Caco-2 (cell line): ENCODE measurements at regions of chr4 and their contacts with region 1.

Region 1: GRCh38 chr4:103478729-103479128 is 241.1 kb downstream of the TACR3 start:
- DNase-seq: peak in 1 of 2 experiments; percentile 9
- H3K4me3 ChIP-seq: no peak overlapping the region
- H3K4me3 Mint-ChIP-seq: no peak overlapping the region
- H3K27ac Mint-ChIP-seq: no peak overlapping the region
- H3K4me1 ChIP-seq: peaks cover 19% of the 10 kb centered on the region
- H3K4me1 Mint-ChIP-seq: no peaks in the 10 kb centered on the region
- H3K27me3 ChIP-seq: no peaks in the 10 kb centered on the region
- H3K27me3 Mint-ChIP-seq: no peaks in the 10 kb centered on the region
- CTCF ChIP-seq: no peak

Region 2: DNA sequence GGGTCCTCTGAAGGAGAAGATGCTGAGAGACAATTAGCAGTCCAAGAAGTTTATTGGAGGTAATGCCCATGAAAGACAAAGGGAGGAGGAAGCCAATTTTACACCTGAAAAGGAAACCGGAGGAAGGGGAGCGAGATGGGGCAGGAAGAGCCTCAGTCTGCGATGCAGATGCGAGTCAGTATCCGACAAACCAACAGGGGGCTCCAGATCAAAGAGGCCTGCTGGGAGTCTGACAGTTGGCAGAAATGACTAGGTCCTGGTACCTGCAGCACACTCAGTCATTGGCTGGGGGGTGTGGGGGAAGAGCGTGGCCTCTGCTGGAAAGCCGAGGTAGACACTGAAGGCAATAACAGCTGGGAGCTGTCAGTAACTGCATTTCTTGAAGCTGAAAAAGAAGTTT is 49.4 kb before region 1 on chr4:
- CTCF ChIA-PET with region 1: no interaction called
- POLR2A ChIA-PET with region 1: no interaction called
- intact Hi-C with region 1: loop called (anchors 1 kb)
- DNase-seq: peak in 1 of 2 experiments; percentile 11
- H3K4me3 ChIP-seq: no peak overlapping the region
- H3K4me3 Mint-ChIP-seq: no peak overlapping the region
- H3K27ac Mint-ChIP-seq: no peak overlapping the region
- H3K4me1 ChIP-seq: peaks cover 22% of the 10 kb centered on the region
- H3K4me1 Mint-ChIP-seq: peaks cover 11% of the 10 kb centered on the region
- H3K27me3 ChIP-seq: no peaks in the 10 kb centered on the region
- H3K27me3 Mint-ChIP-seq: no peaks in the 10 kb centered on the region
- CTCF ChIP-seq: no peak

Region 3: GRCh38 chr4:103493446-103494179 is 14.9 kb after region 1 on chr4:
- CTCF ChIA-PET with region 1: no interaction called
- POLR2A ChIA-PET with region 1: no interaction called
- intact Hi-C with region 1: loop called (anchors 2 kb)
- DNase-seq: peak; percentile 36 to 58
- H3K4me3 ChIP-seq: no peak overlapping the region
- H3K4me3 Mint-ChIP-seq: no peak overlapping the region
- H3K27ac Mint-ChIP-seq: no peak overlapping the region
- H3K4me1 ChIP-seq: peaks cover 21% of the 10 kb centered on the region
- H3K4me1 Mint-ChIP-seq: no peaks in the 10 kb centered on the region
- H3K27me3 ChIP-seq: no peaks in the 10 kb centered on the region
- H3K27me3 Mint-ChIP-seq: no peaks in the 10 kb centered on the region
- CTCF ChIP-seq: no peak

Region 4: DNA sequence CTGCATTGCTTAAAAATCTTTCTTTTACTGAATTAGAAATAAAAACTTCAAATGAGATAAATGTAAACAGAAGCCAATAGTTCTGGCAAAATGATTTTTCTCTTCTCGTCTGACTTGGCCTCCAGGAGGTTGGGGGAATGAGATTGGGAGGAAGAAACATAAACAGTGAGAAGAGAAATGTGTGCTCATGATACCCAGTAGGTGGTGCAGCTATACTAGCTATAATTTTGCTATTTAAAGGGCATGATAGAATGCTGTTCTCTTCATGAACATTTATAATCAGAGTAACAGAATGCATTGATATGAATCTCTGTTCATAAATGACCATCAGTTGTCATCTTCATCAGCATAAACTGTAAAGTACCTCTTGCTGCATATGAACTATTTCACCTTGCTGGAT is 155.5 kb after region 1 on chr4:
- CTCF ChIA-PET with region 1: no interaction called
- POLR2A ChIA-PET with region 1: no interaction called
- intact Hi-C with region 1: loop called (anchors 5 kb)
- DNase-seq: no peak
- H3K4me3 ChIP-seq: no peak overlapping the region
- H3K4me3 Mint-ChIP-seq: no peak overlapping the region
- H3K27ac Mint-ChIP-seq: no peak overlapping the region
- H3K4me1 ChIP-seq: no peaks in the 10 kb centered on the region
- H3K4me1 Mint-ChIP-seq: no peaks in the 10 kb centered on the region
- H3K27me3 ChIP-seq: no peaks in the 10 kb centered on the region
- H3K27me3 Mint-ChIP-seq: no peaks in the 10 kb centered on the region
- CTCF ChIP-seq: peak in 1 of 2 experiments; percentile 15